Posterior cingulate gyrus (tissue), 11 donors: ENCODE measurements at regions of chr5 and their contacts with region 1.

Region 1: DNA sequence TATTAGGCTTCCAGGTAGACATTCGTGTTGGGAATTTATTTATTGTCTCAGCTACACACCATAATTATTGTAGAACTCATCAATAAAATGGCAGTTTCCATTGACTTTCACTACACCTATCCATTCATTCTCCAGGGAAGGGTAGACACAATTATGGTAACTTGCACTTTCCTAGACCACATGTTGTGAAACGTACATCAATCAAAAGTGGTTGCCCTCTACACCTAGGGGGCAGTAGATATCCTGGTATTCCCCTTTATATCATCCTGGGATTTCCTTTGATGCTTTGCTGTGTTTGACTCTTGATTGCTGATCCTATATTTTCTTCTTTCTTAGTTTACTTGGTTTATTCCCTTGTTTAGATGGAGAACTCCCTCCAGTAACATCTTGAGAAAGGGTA is 47.9 kb downstream of the ADGRV1 start:
- DNase-seq: no peak

Region 2: GRCh38 chr5:90434116-90434714 is 172.3 kb before region 1 on chr5:
- intact Hi-C with region 1: loop called (anchors 2 kb)
- DNase-seq: peak in 9 of 10 donors; percentile 39 to 95 (median 71)

Region 3: GRCh38 chr5:91212714-91213092 is 606.2 kb after region 1 on chr5:
- intact Hi-C with region 1: no loop called
- DNase-seq: no peak